ENCODE measurements at regions of chr19 and their contacts with region 1.

Region 1: GRCh38 chr19:11924886-11925650 is at the start of gene ZNF700:
- DNase-seq: peak; percentile 89
- H3K4me3 Mint-ChIP-seq: peak within 1 kb of the TSS; percentile 96
- H3K27ac Mint-ChIP-seq: peak within 1 kb of the TSS; percentile 98
- H3K4me1 Mint-ChIP-seq: peaks cover 33% of the 10 kb centered on the region
- H3K27me3 Mint-ChIP-seq: no peaks in the 10 kb centered on the region
- total RNA-seq, gene ZNF700: 11.9 and 12.2 TPM in 2 replicates

Region 2: GRCh38 chr19:11659612-11660011 is 265.5 kb before region 1 on chr19:
- intact Hi-C with region 1: no loop called
- DNase-seq: no peak
- H3K4me3 Mint-ChIP-seq: no peak overlapping the region
- H3K27ac Mint-ChIP-seq: no peak overlapping the region
- H3K4me1 Mint-ChIP-seq: no peaks in the 10 kb centered on the region
- H3K27me3 Mint-ChIP-seq: no peaks in the 10 kb centered on the region

Region 3: GRCh38 chr19:11798391-11799330 is 126.4 kb before region 1 on chr19 and contains the start of gene ZNF491:
- intact Hi-C with region 1: loop called (anchors 1 kb)
- DNase-seq: peak; percentile 63
- H3K4me3 Mint-ChIP-seq: peak within 1 kb of the TSS; percentile 78
- H3K27ac Mint-ChIP-seq: no peak within 1 kb of the TSS
- H3K4me1 Mint-ChIP-seq: peaks cover 14% of the 10 kb centered on the region
- H3K27me3 Mint-ChIP-seq: no peaks in the 10 kb centered on the region
- total RNA-seq, gene ZNF491: 0.54 and 0.56 TPM in 2 replicates

Region 4: DNA sequence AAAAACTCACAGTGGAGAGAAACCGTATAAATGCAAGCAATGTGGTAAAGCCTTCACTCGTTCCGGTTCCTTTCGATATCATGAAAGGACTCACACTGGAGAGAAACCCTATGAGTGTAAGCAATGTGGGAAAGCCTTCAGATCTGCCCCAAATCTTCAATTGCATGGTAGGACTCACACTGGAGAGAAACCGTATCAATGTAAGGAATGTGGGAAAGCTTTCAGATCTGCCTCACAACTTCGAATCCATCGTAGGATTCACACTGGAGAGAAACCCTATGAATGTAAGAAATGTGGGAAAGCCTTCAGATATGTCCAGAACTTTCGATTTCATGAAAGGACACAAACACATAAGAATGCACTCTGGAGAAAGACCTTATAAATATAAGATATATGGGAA is 56.9 kb before region 1 on chr19:
- intact Hi-C with region 1: no loop called
- DNase-seq: no peak
- H3K4me3 Mint-ChIP-seq: no peak overlapping the region
- H3K27ac Mint-ChIP-seq: no peak overlapping the region
- H3K4me1 Mint-ChIP-seq: no peaks in the 10 kb centered on the region
- H3K27me3 Mint-ChIP-seq: no peaks in the 10 kb centered on the region

Region 5: GRCh38 chr19:11942843-11943108 is 17.7 kb after region 1 on chr19:
- intact Hi-C with region 1: no loop called
- DNase-seq: no peak
- H3K4me3 Mint-ChIP-seq: no peak overlapping the region
- H3K27ac Mint-ChIP-seq: no peak overlapping the region
- H3K4me1 Mint-ChIP-seq: no peaks in the 10 kb centered on the region
- H3K27me3 Mint-ChIP-seq: no peaks in the 10 kb centered on the region

Region 6: GRCh38 chr19:11964858-11965645 is 40.0 kb after region 1 on chr19 and contains the start of gene ZNF763:
- intact Hi-C with region 1: loop called (anchors 1 kb)
- DNase-seq: peak; percentile 69
- H3K4me3 Mint-ChIP-seq: peak within 1 kb of the TSS; percentile 81
- H3K27ac Mint-ChIP-seq: peak within 1 kb of the TSS; percentile 56
- H3K4me1 Mint-ChIP-seq: peaks cover 20% of the 10 kb centered on the region
- H3K27me3 Mint-ChIP-seq: no peaks in the 10 kb centered on the region
- total RNA-seq, gene ZNF763: 0.49 and 1.1 TPM in 2 replicates

Region 7: GRCh38 chr19:12092065-12092867 is 167.2 kb after region 1 on chr19:
- intact Hi-C with region 1: loop called (anchors 1 kb)
- DNase-seq: peak; percentile 41
- H3K4me3 Mint-ChIP-seq: peak overlapping the region; percentile 81
- H3K27ac Mint-ChIP-seq: peak overlapping the region; percentile 76
- H3K4me1 Mint-ChIP-seq: no peaks in the 10 kb centered on the region
- H3K27me3 Mint-ChIP-seq: no peaks in the 10 kb centered on the region

Region 8: GRCh38 chr19:12333162-12334159 is 408.4 kb after region 1 on chr19 and contains the start of gene ZNF563:
- intact Hi-C with region 1: loop called (anchors 1 kb)
- DNase-seq: peak; percentile 96
- H3K4me3 Mint-ChIP-seq: peak within 1 kb of the TSS; percentile 96
- H3K27ac Mint-ChIP-seq: peak within 1 kb of the TSS; percentile 96
- H3K4me1 Mint-ChIP-seq: peaks cover 38% of the 10 kb centered on the region
- H3K27me3 Mint-ChIP-seq: no peaks in the 10 kb centered on the region
- total RNA-seq, gene ZNF563: 1.4 and 2.5 TPM in 2 replicates